MCF 10A (cell line): ENCODE measurements at regions of chrX and their contacts with region 1.

Region 1: GRCh38 chrX:118727740-118728339 is 434 bp downstream of the IL13RA1 start:
- DNase-seq: no peak
- H3K4me3 Mint-ChIP-seq: peak overlapping the region; percentile 66
- H3K27ac Mint-ChIP-seq: peak overlapping the region; percentile 13
- H3K4me1 Mint-ChIP-seq: peaks cover 33% of the 10 kb centered on the region
- H3K27me3 Mint-ChIP-seq: peaks cover 10% of the 10 kb centered on the region
- CTCF ChIP-seq: no peak

Region 2: DNA sequence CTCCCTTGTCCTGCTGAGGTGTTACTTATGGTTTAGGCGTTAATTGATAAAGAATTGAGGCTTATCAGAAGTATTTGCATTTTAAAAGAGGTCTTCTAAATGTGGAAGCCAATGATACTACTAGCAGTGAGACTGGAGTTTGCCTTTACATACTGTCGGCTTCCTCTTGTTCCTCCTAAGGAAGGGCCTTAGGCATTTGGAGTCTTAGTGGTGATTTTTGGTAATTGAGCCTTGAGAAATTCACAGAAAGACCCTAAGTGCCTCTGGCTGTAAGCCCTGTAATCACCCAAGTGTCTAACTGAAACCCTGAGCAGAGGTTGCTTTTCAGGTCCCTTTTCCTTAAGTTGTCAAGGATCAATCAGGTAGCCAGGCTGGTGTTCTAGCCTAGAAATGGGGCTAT is 14.3 kb after region 1 on chrX:
- CTCF ChIA-PET with region 1: interaction called, 5 read pairs
- POLR2A ChIA-PET with region 1: interaction called, 10 read pairs
- intact Hi-C with region 1: no loop called
- DNase-seq: no peak
- H3K4me3 Mint-ChIP-seq: no peak overlapping the region
- H3K27ac Mint-ChIP-seq: no peak overlapping the region
- H3K4me1 Mint-ChIP-seq: no peaks in the 10 kb centered on the region
- H3K27me3 Mint-ChIP-seq: peaks cover 34% of the 10 kb centered on the region
- CTCF ChIP-seq: no peak